ENCODE measurements at regions of chr7 and their contacts with region 1.

Region 1: DNA sequence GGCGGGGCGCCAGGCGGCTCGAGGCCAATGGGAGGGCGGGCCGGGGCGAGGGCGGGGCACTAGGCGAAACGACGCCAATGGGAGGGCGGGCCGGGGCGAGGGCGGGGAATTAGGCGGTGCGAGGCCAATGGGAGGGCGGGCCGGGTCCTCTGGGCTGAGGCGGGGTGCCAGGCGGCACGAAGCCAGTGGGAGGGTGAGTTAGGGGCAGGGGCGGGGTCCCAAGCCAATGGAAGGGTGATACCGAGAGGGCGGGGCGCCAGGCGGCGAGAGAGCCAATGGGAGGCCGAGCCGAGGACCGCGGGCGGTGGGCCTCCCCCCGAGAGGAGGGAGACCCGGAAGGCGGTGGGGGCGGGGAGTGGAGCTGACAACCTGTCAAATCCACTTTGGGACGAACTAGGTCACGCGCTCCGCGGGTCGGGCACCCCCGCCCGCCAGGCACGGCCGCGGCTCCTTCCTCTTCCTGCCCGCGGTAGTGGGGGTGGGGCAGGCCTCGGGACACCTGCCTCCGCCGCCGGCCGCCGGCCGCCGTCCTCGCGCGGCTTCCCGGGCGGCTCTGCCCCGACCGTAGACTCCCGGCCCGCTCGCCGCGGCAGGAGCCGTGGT is 28.0 kb upstream of the KMT2C start:
- DNase-seq: peak; percentile 100
- H3K4me3 ChIP-seq: peak overlapping the region; percentile 82 to 100 (median 92)
- H3K27ac ChIP-seq: peak overlapping the region; percentile 100
- H3K4me1 ChIP-seq: peaks cover 7 to 22% (median 16%) of the 10 kb centered on the region in 4 donors
- H3K27me3 ChIP-seq: no peaks in the 10 kb centered on the region
- CTCF ChIP-seq: no peak
- EP300 ChIP-seq: peak; percentile 33
- POLR2A ChIP-seq: peak; percentile 94

Region 2: GRCh38 chr7:152341039-152341913 is 122.5 kb before region 1 on chr7:
- intact Hi-C with region 1: loop called (anchors 10 kb)
- DNase-seq: no peak
- H3K4me3 ChIP-seq: no peak overlapping the region
- H3K27ac ChIP-seq: peak overlapping the region in 2 of 4 donors; percentile 10
- H3K4me1 ChIP-seq: peaks cover 13 to 60% (median 51%) of the 10 kb centered on the region in 4 donors
- H3K27me3 ChIP-seq: no peaks in the 10 kb centered on the region
- CTCF ChIP-seq: peak; percentile 38 to 52 (median 40)
- EP300 ChIP-seq: no peak
- POLR2A ChIP-seq: no peak

Region 3: GRCh38 chr7:152436111-152436930 is 27.5 kb before region 1 on chr7:
- intact Hi-C with region 1: loop called (anchors 2 kb)
- DNase-seq: peak; percentile 97
- H3K4me3 ChIP-seq: peak overlapping the region; percentile 62 to 99 (median 96)
- H3K27ac ChIP-seq: peak overlapping the region; percentile 98 to 99 (median 98)
- H3K4me1 ChIP-seq: peaks cover 17 to 38% (median 28%) of the 10 kb centered on the region in 4 donors
- H3K27me3 ChIP-seq: no peaks in the 10 kb centered on the region
- CTCF ChIP-seq: no peak
- EP300 ChIP-seq: no peak
- POLR2A ChIP-seq: peak; percentile 59

Region 4: GRCh38 chr7:152675759-152676636 is 212.2 kb after region 1 on chr7 and contains the start of gene XRCC2:
- intact Hi-C with region 1: loop called (anchors 5 kb)
- DNase-seq: peak; percentile 96
- H3K4me3 ChIP-seq: peak within 1 kb of the TSS; percentile 63 to 78 (median 74)
- H3K27ac ChIP-seq: peak within 1 kb of the TSS; percentile 74 to 84 (median 82)
- H3K4me1 ChIP-seq: peaks cover 11 to 14% (median 12%) of the 10 kb centered on the region in 4 donors
- H3K27me3 ChIP-seq: no peaks in the 10 kb centered on the region
- CTCF ChIP-seq: peak in 1 of 3 experiments; percentile 27
- EP300 ChIP-seq: no peak
- POLR2A ChIP-seq: peak; percentile 20
- total RNA-seq, gene XRCC2: 0.17 to 0.57 (median 0.43) TPM

Measured in esophagus muscularis mucosa (tissue), 4 donors.